Tibial artery (tissue), 4 donors: ENCODE measurements at regions of chr2 and their contacts with region 1.

Region 1: GRCh38 chr2:182186132-182186735 is 200.6 kb downstream of the PPP1R1C start:
- DNase-seq: no peak
- H3K4me3 ChIP-seq: no peak overlapping the region
- H3K27ac ChIP-seq: peak overlapping the region in 1 of 2 donors; percentile 16
- H3K4me1 ChIP-seq: peaks cover 0 to 11% (median 0%) of the 10 kb centered on the region in 4 donors
- H3K27me3 ChIP-seq: no peaks in the 10 kb centered on the region
- CTCF ChIP-seq: peak; percentile 78 to 87

Region 2: DNA sequence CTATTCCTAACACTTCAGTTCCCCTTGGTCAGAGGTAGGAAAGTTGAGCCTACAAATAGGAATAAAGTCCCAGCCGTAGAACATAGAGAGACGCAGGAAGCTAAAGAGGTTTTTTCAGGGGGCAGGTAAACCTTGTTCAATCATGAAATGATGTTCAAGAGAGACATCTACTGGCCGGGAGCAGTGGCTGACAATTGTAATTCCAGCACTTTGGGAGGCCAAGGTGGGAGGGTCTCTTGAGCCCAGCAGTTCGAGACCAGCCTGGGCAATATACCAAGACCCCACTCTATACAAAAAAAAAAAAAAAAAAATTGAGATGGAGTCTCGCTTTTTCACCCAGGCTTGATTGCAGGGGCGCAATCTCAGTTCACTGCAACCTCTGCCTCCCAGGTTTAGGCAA is 463.1 kb after region 1 on chr2:
- intact Hi-C with region 1: loop called (anchors 1 kb)
- DNase-seq: no peak
- H3K4me3 ChIP-seq: no peak overlapping the region
- H3K27ac ChIP-seq: no peak overlapping the region
- H3K4me1 ChIP-seq: peaks cover 0 to 4% (median 0%) of the 10 kb centered on the region in 4 donors
- H3K27me3 ChIP-seq: no peaks in the 10 kb centered on the region
- CTCF ChIP-seq: peak in 1 of 2 experiments; percentile 19